ENCODE measurements at regions of chr16 and their contacts with region 1.

Region 1: DNA sequence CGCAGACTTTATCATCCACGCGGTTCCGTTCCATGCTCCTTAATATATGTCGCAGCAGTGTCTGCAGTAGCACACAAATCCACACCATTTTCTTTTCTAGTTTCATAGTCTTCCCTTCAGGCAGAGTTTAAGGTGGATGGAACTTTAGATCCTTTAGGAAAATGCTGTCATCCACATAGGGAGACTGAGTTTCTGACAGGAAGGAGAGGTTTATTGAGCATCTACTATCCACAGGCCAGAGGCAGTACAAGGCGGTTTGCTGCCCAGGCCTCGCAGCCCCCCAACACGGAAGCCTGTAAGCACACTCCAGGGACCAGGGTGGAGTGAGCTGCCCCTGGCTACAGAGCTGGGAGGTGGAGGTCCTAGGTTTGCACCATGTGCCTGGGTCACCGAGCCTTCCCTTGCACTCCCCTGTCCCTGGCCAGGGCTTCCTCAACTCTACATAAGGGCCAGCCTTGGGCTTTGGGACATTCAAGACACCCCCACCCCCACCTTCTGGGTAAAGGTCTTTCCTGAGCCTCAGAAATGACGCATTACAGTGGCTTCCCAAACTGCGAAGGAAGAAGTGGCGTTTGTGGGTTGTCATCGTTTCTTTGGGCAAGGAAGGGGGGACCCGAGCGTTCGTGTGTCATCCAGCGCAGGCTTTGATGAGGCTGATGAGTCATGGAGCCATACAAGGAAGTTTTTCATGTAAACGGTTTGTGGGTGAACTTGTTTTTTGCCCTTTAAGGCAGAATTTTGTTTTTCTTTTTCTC is 146.5 kb upstream of the PLCG2 start:
- DNase-seq: peak; percentile 95
- H3K4me3 Mint-ChIP-seq: peak overlapping the region; percentile 64
- H3K27ac Mint-ChIP-seq: peak overlapping the region; percentile 96
- H3K4me1 Mint-ChIP-seq: peaks cover 66% of the 10 kb centered on the region
- H3K27me3 Mint-ChIP-seq: no peaks in the 10 kb centered on the region

Region 2: GRCh38 chr16:81006814-81007696 is 625.5 kb before region 1 on chr16 and contains the starts of genes CENPN and CMC2:
- CTCF ChIA-PET with region 1: no interaction called
- intact Hi-C with region 1: loop called (anchors 10 kb)
- DNase-seq: peak; percentile 98
- H3K4me3 Mint-ChIP-seq: peak within 1 kb of the TSS; percentile 95
- H3K27ac Mint-ChIP-seq: peak within 1 kb of the TSS; percentile 100
- H3K4me1 Mint-ChIP-seq: peaks cover 50% of the 10 kb centered on the region
- H3K27me3 Mint-ChIP-seq: no peaks in the 10 kb centered on the region
- total RNA-seq, gene CENPN: 65.1 to 75.0 TPM
- total RNA-seq, gene CMC2: 112 to 122 TPM

Region 3: GRCh38 chr16:81095953-81096717 is 536.4 kb before region 1 on chr16 and contains the start of gene GCSH:
- CTCF ChIA-PET with region 1: no interaction called
- intact Hi-C with region 1: loop called (anchors 5 kb)
- DNase-seq: peak; percentile 98
- H3K4me3 Mint-ChIP-seq: peak within 1 kb of the TSS; percentile 78
- H3K27ac Mint-ChIP-seq: peak within 1 kb of the TSS; percentile 51
- H3K4me1 Mint-ChIP-seq: peaks cover 17% of the 10 kb centered on the region
- H3K27me3 Mint-ChIP-seq: no peaks in the 10 kb centered on the region
- total RNA-seq, gene GCSH: 25.7 to 27.4 TPM

Region 4: GRCh38 chr16:81616321-81617055 is 16.1 kb before region 1 on chr16:
- CTCF ChIA-PET with region 1: interaction called, 17 read pairs
- intact Hi-C with region 1: loop called (anchors 1 kb)
- DNase-seq: peak; percentile 90
- H3K4me3 Mint-ChIP-seq: peak overlapping the region; percentile 20
- H3K27ac Mint-ChIP-seq: peak overlapping the region; percentile 83
- H3K4me1 Mint-ChIP-seq: peaks cover 16% of the 10 kb centered on the region
- H3K27me3 Mint-ChIP-seq: no peaks in the 10 kb centered on the region

Region 5: GRCh38 chr16:81696961-81697615 is 64.5 kb after region 1 on chr16:
- CTCF ChIA-PET with region 1: interaction called, 8 read pairs
- intact Hi-C with region 1: loop called (anchors 2 kb)
- DNase-seq: peak; percentile 78
- H3K4me3 Mint-ChIP-seq: no peak overlapping the region
- H3K27ac Mint-ChIP-seq: peak overlapping the region; percentile 63
- H3K4me1 Mint-ChIP-seq: no peaks in the 10 kb centered on the region
- H3K27me3 Mint-ChIP-seq: no peaks in the 10 kb centered on the region

Region 6: DNA sequence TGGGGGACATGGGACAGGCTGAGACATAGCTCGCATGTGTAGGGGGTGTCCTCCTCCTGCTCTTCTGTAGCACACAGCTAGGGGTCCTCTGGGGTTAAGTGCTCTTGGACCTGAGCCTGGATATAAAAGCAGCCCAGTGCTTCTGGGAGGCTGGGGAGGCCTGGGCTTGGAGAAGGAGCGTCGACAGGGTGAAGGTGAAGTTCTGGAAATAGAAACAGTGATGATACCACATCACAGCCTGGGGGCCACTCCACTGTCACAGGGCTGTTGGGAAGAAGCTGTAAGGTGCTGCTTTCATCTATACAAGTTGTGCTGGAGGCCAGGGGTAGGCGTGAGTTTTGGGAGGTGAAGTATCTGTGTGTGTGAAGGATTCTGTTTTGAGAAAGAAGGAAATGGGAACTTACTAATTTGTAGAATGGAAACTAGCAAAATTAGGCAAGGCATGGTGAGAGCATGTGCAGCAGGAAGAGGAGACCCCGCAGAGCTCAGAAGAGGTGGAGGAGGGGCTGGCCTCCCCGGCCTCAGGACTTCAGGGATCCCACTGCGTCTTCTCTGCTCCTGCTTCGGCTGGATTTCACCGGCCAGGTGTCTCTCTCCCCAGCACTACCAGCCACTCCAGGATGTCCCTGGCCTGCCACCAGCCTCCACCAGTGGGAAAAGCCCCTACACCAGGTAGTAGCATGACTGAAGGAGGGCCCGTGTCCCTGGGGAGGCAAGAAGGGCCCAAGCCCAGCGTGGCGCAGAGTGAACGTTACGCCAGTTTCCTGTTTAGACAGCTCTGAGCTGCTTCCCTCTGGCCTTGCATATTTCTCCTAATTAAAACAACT is 166.0 kb after region 1 on chr16:
- CTCF ChIA-PET with region 1: no interaction called
- intact Hi-C with region 1: loop called (anchors 2 kb)
- DNase-seq: peak; percentile 85
- H3K4me3 Mint-ChIP-seq: peak overlapping the region; percentile 55
- H3K27ac Mint-ChIP-seq: peak overlapping the region; percentile 90
- H3K4me1 Mint-ChIP-seq: peaks cover 25% of the 10 kb centered on the region
- H3K27me3 Mint-ChIP-seq: no peaks in the 10 kb centered on the region

Region 7: DNA sequence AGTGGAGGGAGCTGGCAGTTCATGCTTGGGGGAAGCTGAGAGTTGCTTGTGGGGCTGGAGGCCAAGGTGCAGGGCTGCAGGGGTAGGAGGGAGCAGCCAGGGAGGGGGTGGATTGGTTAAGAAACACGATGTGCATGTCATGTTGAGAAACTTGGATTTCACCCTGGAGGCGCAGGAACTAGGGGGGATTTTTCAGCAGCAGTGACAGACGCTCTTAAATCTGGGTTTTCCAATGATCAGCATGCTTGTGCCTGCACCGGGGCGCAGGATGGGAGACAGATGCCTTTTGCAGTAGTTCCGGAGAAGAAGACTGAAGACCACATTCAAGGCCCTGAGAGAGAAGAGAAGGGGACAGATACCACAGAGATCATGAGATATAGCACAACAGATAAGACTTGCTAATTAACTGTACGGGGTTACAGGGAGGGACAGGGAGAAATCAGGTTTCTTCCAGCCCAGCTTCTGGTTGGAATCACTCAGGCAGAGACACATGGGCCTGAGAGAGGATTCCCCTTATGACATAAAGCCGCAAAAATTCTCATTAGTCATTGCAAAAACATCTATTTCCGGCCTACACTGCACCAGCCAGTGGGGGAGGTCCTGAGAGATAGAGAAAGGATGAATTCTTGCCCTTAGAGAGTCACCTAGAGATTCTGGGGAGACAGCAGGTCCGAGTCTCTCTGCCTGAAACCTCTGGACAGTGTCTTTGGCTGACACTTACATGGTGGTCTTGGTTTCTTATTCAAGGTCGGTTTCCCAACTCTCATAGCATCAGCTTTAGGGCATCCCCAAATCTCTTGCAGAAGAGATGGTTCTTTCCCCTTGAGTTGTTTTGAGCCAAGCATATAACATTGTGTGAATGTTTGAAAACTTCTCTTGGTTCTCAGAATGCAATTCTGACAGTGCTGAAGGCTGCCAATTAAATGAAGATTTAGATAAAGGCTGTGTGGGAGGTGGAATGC is 1021.3 kb after region 1 on chr16:
- CTCF ChIA-PET with region 1: no interaction called
- intact Hi-C with region 1: loop called (anchors 5 kb)
- DNase-seq: peak; percentile 67
- H3K4me3 Mint-ChIP-seq: peak overlapping the region; percentile 38
- H3K27ac Mint-ChIP-seq: peak overlapping the region; percentile 88
- H3K4me1 Mint-ChIP-seq: peaks cover 66% of the 10 kb centered on the region
- H3K27me3 Mint-ChIP-seq: no peaks in the 10 kb centered on the region